ENCODE measurements at regions of chr16 and their contacts with region 1.

Region 1: DNA sequence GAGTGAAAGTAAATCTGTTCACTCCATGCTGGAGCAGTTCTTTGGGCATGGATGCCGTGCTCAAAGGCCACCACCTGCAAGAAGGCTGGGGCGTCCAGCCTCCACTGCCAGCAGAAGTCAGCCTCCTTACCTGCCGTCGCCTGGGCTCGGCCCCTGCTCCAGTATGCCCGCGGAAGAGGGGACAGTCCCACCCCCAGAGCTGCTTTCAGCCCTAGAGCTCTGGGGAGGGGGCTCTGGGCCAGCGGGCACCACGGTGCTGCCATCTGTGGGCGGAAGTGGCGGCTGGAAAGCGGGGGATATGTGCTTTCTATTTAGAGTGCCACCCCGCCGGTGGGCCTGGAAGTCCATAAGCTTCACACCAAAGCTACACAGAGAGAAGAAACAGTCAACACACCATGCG is 75.9 kb downstream of the ARHGAP17 start:
- DNase-seq: no peak
- H3K4me3 ChIP-seq: no peak overlapping the region
- H3K27ac ChIP-seq: no peak overlapping the region
- H3K4me1 ChIP-seq: no peaks in the 10 kb centered on the region
- H3K27me3 ChIP-seq: no peaks in the 10 kb centered on the region
- CTCF ChIP-seq: no peak

Region 2: GRCh38 chr16:24844101-24845030 is 94.9 kb before region 1 on chr16:
- CTCF ChIA-PET with region 1: no interaction called
- dilution Hi-C with region 1: loop called (anchors 5 kb)
- in situ Hi-C with region 1: no loop called
- intact Hi-C with region 1: no loop called
- DNase-seq: peak; percentile 23
- H3K4me3 ChIP-seq: no peak overlapping the region
- H3K27ac ChIP-seq: no peak overlapping the region
- H3K4me1 ChIP-seq: peaks cover 12% of the 10 kb centered on the region
- H3K27me3 ChIP-seq: no peaks in the 10 kb centered on the region
- CTCF ChIP-seq: no peak

Region 3: DNA sequence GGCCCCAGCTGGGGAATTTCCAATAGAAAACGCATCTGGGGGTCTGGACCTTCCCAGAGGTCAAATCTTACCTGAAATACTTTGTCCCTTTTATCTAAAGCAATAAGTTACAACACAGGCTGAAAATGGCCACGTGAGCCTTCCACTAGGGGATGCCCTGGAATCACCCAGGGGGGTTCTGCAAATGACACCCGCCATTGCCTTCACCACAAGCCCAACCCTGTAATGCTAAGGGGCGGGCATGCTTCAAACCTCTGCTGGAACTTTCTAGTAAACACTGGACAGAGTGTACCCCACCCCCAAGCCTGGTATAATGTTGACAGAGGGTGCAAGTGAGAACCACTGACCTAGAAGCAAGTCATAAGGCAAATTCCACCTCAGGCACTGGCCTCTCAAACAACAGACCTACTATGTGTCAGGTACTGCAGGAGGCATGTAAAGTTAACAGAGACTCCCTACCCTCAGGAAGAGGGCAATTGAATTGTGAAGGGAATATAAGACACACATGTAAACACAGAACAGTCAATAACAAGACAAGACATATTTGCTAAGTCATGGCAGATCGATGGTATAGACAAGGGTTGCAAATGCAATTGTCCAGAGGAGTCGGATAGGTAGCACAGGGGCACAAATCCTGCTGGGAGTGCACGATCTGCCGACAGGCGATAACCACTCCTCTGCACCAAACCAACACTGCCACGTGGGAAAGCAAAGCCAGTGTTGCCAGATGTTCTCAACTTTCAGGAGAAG is 16.9 kb after region 1 on chr16:
- CTCF ChIA-PET with region 1: no interaction called
- dilution Hi-C with region 1: no loop called
- in situ Hi-C with region 1: no loop called
- intact Hi-C with region 1: no loop called
- DNase-seq: no peak
- H3K4me3 ChIP-seq: no peak overlapping the region
- H3K27ac ChIP-seq: no peak overlapping the region
- H3K4me1 ChIP-seq: no peaks in the 10 kb centered on the region
- H3K27me3 ChIP-seq: no peaks in the 10 kb centered on the region
- CTCF ChIP-seq: no peak

Measured in mammary epithelial cell (primary cell).